Cardiac septum (tissue), 1 donor: ENCODE measurements at regions of chr11 and their contacts with region 1.

Region 1: GRCh38 chr11:95850137-95850536 is 59.8 kb downstream of the CEP57 start:
- DNase-seq: no peak

Region 2: DNA sequence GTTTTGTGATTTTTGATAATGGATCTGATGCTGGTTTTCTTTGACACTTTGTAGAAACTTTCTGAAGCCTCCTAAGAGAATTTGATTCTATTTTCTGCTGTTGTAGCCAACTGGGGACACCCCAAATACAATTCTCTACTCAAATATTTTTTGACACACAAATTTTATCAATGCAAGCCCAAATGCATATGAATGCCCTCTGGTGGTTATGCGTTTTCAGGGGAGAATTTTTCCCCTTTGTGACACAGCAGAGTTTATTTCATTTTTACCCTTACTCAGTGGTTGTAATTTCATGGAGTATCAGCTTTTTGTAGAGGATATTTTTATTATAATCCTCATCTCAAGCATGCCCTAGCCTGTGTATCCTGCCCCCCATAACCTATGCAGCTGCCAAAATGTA is 118.4 kb after region 1 on chr11:
- intact Hi-C with region 1: loop called (anchors 10 kb)
- DNase-seq: no peak